Gastrocnemius medialis (tissue), 4 donors: ENCODE measurements at regions of chr20 and their contacts with region 1.

Region 1: GRCh38 chr20:49219089-49219923 is at the start of gene DDX27:
- DNase-seq: peak; percentile 96
- ATAC-seq: peak; percentile 98 to 99
- H3K4me3 ChIP-seq: peak within 1 kb of the TSS; percentile 81 to 86 (median 84)
- H3K27ac ChIP-seq: peak within 1 kb of the TSS; percentile 89 to 91 (median 90)
- H3K4me1 ChIP-seq: peaks cover 10 to 15% of the 10 kb centered on the region in 2 donors
- H3K27me3 ChIP-seq: no peaks in the 10 kb centered on the region
- CTCF ChIP-seq: no peak
- POLR2A ChIP-seq: peak; percentile 76 to 80
- total RNA-seq, gene DDX27: 12.6 to 39.7 (median 23.3) TPM

Region 2: DNA sequence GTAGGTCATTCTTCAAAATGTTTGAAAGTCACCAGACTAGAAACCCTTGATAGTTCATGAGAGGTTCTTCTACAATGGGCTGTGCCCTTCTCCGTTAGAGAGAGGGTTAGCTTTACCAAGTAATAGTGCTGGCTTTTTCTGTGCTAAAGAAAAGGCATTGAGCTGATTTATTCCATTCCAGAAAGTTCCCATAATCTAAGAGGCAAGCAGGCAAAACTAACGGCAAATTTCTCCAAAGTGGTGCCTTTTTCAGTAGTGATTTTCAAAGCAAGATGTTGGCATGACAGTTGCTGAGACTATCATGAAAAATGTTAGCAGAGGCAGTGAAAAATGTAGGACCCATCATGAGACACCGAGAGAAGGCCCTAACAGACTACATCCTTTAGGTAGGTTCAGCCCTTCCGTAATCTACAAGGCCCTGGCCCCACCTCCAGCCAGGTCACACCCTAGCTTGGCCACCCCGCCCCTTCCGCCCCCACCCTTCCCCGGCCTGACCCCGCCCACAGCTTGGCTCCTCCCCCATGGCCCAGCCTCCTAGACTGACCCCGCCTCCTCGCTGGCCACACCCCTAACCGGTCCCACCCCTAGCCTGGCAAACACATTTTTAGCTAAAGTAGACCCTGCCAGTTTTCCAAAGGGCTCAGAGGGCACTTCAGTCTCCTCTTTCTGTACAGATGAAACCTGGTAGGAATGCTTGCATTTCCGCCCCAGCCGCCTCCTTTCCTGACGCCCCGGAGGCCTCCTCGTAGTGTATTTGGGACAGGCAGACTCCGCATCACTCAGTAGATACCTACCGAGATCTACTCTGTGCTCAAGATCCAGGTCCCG is 835.2 kb before region 1 on chr20:
- in situ Hi-C with region 1: no loop called
- intact Hi-C with region 1: no loop called
- DNase-seq: no peak
- ATAC-seq: no peak
- H3K4me3 ChIP-seq: no peak overlapping the region
- H3K27ac ChIP-seq: no peak overlapping the region
- H3K4me1 ChIP-seq: no peaks in the 10 kb centered on the region
- H3K27me3 ChIP-seq: no peaks in the 10 kb centered on the region
- CTCF ChIP-seq: no peak
- POLR2A ChIP-seq: no peak

Region 3: GRCh38 chr20:49046087-49046900 is 173.0 kb before region 1 on chr20 and contains the start of gene CSE1L:
- in situ Hi-C with region 1: no loop called
- intact Hi-C with region 1: loop called (anchors 2 kb)
- DNase-seq: peak; percentile 93 to 94
- ATAC-seq: peak; percentile 95
- H3K4me3 ChIP-seq: peak within 1 kb of the TSS; percentile 73 to 98 (median 84)
- H3K27ac ChIP-seq: peak within 1 kb of the TSS; percentile 92 to 97 (median 94)
- H3K4me1 ChIP-seq: peaks cover 11 to 19% of the 10 kb centered on the region in 2 donors
- H3K27me3 ChIP-seq: no peaks in the 10 kb centered on the region
- CTCF ChIP-seq: peak in 4 of 5 experiments; percentile 10 to 56 (median 50)
- POLR2A ChIP-seq: peak; percentile 85 to 87
- total RNA-seq, gene CSE1L: 44.0 to 59.6 (median 58.3) TPM

Region 4: GRCh38 chr20:49078296-49078695 is 141.0 kb before region 1 on chr20:
- in situ Hi-C with region 1: no loop called
- intact Hi-C with region 1: no loop called
- DNase-seq: no peak
- ATAC-seq: no peak
- H3K4me3 ChIP-seq: no peak overlapping the region
- H3K27ac ChIP-seq: no peak overlapping the region
- H3K4me1 ChIP-seq: no peaks in the 10 kb centered on the region
- H3K27me3 ChIP-seq: no peaks in the 10 kb centered on the region
- CTCF ChIP-seq: no peak
- POLR2A ChIP-seq: no peak

Region 5: GRCh38 chr20:49132995-49133478 is 86.3 kb before region 1 on chr20:
- in situ Hi-C with region 1: loop called (anchors 5 kb)
- intact Hi-C with region 1: loop called (anchors 1 kb)
- DNase-seq: no peak
- ATAC-seq: peak; percentile 83 to 84
- H3K4me3 ChIP-seq: no peak overlapping the region
- H3K27ac ChIP-seq: peak overlapping the region in 1 of 4 donors; percentile 42
- H3K4me1 ChIP-seq: no peaks in the 10 kb centered on the region
- H3K27me3 ChIP-seq: no peaks in the 10 kb centered on the region
- CTCF ChIP-seq: peak; percentile 34 to 64 (median 58)
- POLR2A ChIP-seq: no peak

Region 6: DNA sequence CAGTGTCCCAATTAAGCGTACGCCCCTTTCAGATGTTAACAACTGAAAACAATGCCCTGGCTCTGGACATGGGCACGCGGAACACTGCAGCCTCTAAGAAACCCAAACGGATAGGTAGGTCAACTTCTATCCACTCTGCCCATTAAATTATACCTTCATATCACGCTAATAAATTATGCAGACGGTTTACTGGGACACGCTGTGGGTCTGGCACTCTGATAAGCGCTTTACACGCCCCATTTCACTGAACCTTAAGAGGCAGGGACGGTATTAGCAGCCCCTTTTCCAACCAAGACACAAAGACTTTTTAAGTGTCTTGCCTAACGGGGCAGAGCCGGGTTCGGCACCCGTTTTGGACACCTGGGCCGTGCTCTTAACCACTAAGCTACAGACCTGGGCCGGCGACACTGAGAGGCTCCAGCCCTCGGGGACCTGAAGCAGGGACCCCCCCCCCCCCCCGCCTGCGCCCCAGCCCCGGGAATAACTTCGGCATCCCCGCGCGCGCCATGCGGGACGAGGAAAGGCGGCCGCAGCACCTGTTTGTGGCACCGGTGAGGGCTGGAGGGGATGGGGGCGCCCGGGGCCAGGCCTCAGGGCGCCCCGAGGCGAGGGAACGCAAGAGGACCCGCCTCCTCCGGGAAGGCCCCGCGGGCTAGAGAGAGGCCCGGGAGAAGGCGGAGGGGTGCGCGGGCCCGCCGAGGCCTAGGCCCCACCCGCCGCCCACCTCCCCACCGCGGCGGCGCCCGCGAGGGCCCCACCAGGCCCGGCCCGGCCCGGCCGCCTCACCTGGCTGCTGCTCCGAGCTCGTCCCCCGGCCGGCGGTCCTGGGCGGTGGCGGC is 31.8 kb before region 1 on chr20:
- in situ Hi-C with region 1: no loop called
- intact Hi-C with region 1: loop called (anchors 1 kb)
- DNase-seq: peak in 1 of 2 donors; percentile 28
- ATAC-seq: peak; percentile 41 to 42
- H3K4me3 ChIP-seq: peak overlapping the region; percentile 74 to 83 (median 82)
- H3K27ac ChIP-seq: peak overlapping the region; percentile 84 to 98 (median 92)
- H3K4me1 ChIP-seq: peaks cover 16 to 30% of the 10 kb centered on the region in 2 donors
- H3K27me3 ChIP-seq: no peaks in the 10 kb centered on the region
- CTCF ChIP-seq: no peak
- POLR2A ChIP-seq: no peak

Region 7: DNA sequence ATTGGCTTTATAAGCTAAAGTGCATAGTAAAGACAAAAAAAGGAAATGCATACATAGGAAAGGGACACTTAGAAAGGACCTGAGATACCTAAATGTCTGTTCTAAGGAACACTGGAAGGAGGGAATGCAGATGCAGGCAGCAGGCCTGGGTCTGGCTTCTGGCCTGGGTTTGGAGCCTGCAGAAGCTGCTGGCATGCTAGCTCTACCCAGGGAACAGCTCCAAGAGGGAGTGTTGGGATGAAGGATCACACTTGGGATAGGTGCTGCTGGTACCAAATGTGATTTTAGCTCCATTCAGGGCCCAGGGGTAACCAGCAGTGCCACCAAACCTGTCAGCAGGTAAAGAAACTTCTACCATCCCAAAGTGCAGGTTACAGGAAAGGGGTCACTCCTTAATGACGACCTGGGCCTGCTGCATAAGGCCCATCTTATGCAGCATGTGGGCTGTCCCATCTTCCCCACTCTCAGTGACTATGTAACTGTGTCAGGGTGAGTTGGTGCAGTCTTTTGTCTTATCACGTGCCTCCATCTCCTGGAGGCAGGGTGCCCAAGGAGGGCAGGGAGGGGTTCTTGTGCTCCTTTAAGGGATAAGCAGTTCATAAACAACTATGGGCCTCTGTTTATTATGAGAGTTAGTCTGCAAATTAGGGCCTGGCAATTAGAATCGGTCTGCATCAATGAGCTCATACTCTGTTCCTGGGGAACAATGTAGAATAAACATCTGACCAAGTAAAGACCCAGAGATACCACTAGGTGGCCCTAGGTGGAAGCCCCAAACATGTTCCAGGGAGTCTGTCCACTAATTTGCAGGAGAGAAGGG is 26.8 kb after region 1 on chr20:
- in situ Hi-C with region 1: no loop called
- intact Hi-C with region 1: no loop called
- DNase-seq: no peak
- ATAC-seq: peak; percentile 47 to 55
- H3K4me3 ChIP-seq: no peak overlapping the region
- H3K27ac ChIP-seq: no peak overlapping the region
- H3K4me1 ChIP-seq: no peaks in the 10 kb centered on the region
- H3K27me3 ChIP-seq: no peaks in the 10 kb centered on the region
- CTCF ChIP-seq: peak; percentile 13 to 53 (median 34)
- POLR2A ChIP-seq: no peak

Region 8: GRCh38 chr20:49278036-49278817 is 58.9 kb after region 1 on chr20 and contains the start of gene ZNFX1:
- in situ Hi-C with region 1: no loop called
- intact Hi-C with region 1: loop called (anchors 1 kb)
- DNase-seq: peak; percentile 99
- ATAC-seq: peak; percentile 92
- H3K4me3 ChIP-seq: peak within 1 kb of the TSS; percentile 62 to 88 (median 78)
- H3K27ac ChIP-seq: peak within 1 kb of the TSS; percentile 95 to 99 (median 98)
- H3K4me1 ChIP-seq: peaks cover 44 to 56% of the 10 kb centered on the region in 2 donors
- H3K27me3 ChIP-seq: no peaks in the 10 kb centered on the region
- CTCF ChIP-seq: peak in 1 of 5 experiments; percentile 21
- POLR2A ChIP-seq: peak; percentile 96 to 98
- total RNA-seq, gene ZNFX1: 28.7 to 34.9 (median 31.1) TPM

Region 9: DNA sequence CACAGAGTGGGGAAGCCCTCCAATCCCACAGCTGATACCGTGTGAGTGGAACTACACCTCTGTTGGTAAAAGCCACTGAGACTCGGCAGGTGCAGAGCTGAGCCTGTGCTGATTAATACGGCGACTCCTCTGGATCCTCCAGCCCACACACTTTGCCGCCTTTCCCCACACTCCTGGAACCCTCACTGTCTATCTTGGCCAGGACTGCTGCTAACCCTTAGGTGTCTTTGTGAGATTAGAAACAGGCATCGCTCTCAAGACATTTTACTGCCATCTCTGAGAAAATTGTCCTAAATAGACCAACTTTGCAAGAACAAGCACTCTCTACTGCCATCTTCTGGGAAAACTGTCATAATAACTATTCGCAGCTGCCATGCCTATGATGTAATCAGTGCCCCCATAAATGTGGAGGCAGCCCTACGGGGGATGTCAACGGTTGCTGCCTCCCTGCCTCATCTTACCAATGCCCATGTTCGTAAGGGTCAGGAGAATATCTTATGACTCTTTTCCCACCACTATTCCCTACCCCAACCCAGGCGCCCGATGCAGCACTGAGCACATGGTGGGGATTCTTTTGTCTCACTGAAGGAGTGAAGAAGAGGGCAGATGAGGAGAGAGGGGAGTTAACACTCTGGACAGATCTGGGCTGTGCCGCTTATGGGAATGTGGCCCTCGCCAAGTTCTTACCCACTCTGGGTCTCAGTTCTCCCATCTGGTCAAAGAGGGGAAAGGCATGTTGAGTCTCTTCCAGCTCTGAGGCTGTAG is 289.3 kb after region 1 on chr20:
- in situ Hi-C with region 1: no loop called
- intact Hi-C with region 1: no loop called
- DNase-seq: no peak
- ATAC-seq: peak; percentile 33 to 51
- H3K4me3 ChIP-seq: peak overlapping the region in 1 of 4 donors; percentile 21
- H3K27ac ChIP-seq: peak overlapping the region; percentile 4 to 82 (median 77)
- H3K4me1 ChIP-seq: peaks cover 34 to 41% of the 10 kb centered on the region in 2 donors
- H3K27me3 ChIP-seq: no peaks in the 10 kb centered on the region
- CTCF ChIP-seq: peak; percentile 44 to 66 (median 53)
- POLR2A ChIP-seq: no peak